CD8-positive, alpha-beta T cell (primary cell): ENCODE measurements at regions of chr4 and their contacts with region 1.

Region 1: GRCh38 chr4:88591787-88592599 is at the start of gene HERC3:
- DNase-seq: peak; percentile 75 to 94 (median 88)
- ATAC-seq: peak; percentile 84
- H3K4me3 ChIP-seq: peak within 1 kb of the TSS; percentile 89 to 96
- H3K4me3 Mint-ChIP-seq: peak within 1 kb of the TSS; percentile 99
- H3K27ac ChIP-seq: peak within 1 kb of the TSS; percentile 82 to 85
- H3K27ac Mint-ChIP-seq: peak within 1 kb of the TSS; percentile 97
- H3K4me1 ChIP-seq: peaks cover 22% of the 10 kb centered on the region
- H3K4me1 Mint-ChIP-seq: peaks cover 43% of the 10 kb centered on the region
- H3K27me3 ChIP-seq: no peaks in the 10 kb centered on the region
- H3K27me3 Mint-ChIP-seq: no peaks in the 10 kb centered on the region
- CTCF ChIP-seq: no peak
- total RNA-seq, gene HERC3: 50.4 to 62.4 TPM

Region 2: GRCh38 chr4:86934771-86935565 is 1657.0 kb before region 1 on chr4 and contains the start of gene AFF1:
- CTCF ChIA-PET with region 1: no interaction called
- POLR2A ChIA-PET with region 1: no interaction called
- intact Hi-C with region 1: loop called (anchors 10 kb)
- DNase-seq: peak; percentile 74 to 97 (median 85)
- ATAC-seq: peak; percentile 71
- H3K4me3 ChIP-seq: peak within 1 kb of the TSS; percentile 76 to 87
- H3K4me3 Mint-ChIP-seq: peak within 1 kb of the TSS; percentile 88
- H3K27ac ChIP-seq: peak within 1 kb of the TSS; percentile 81 to 85
- H3K27ac Mint-ChIP-seq: peak within 1 kb of the TSS; percentile 95
- H3K4me1 ChIP-seq: peaks cover 42% of the 10 kb centered on the region
- H3K4me1 Mint-ChIP-seq: peaks cover 50% of the 10 kb centered on the region
- H3K27me3 ChIP-seq: no peaks in the 10 kb centered on the region
- H3K27me3 Mint-ChIP-seq: no peaks in the 10 kb centered on the region
- CTCF ChIP-seq: peak; percentile 44
- total RNA-seq, gene AFF1: 32.3 to 33.8 TPM

Region 3: GRCh38 chr4:88378691-88379559 is 213.1 kb before region 1 on chr4 and contains the start of gene HERC6:
- CTCF ChIA-PET with region 1: no interaction called
- POLR2A ChIA-PET with region 1: no interaction called
- intact Hi-C with region 1: loop called in 1 of 2 experiments (anchors 5 kb)
- DNase-seq: peak; percentile 39 to 93 (median 73)
- ATAC-seq: peak; percentile 63
- H3K4me3 ChIP-seq: peak within 1 kb of the TSS; percentile 82 to 98
- H3K4me3 Mint-ChIP-seq: peak within 1 kb of the TSS; percentile 96
- H3K27ac ChIP-seq: peak within 1 kb of the TSS; percentile 88 to 91
- H3K27ac Mint-ChIP-seq: peak within 1 kb of the TSS; percentile 95
- H3K4me1 ChIP-seq: peaks cover 31% of the 10 kb centered on the region
- H3K4me1 Mint-ChIP-seq: peaks cover 43% of the 10 kb centered on the region
- H3K27me3 ChIP-seq: no peaks in the 10 kb centered on the region
- H3K27me3 Mint-ChIP-seq: no peaks in the 10 kb centered on the region
- CTCF ChIP-seq: peak; percentile 57
- total RNA-seq, gene HERC6: 8.2 TPM

Region 4: GRCh38 chr4:88523325-88524129 is 68.5 kb before region 1 on chr4 and contains the start of gene PYURF:
- CTCF ChIA-PET with region 1: interaction called, 3 read pairs
- POLR2A ChIA-PET with region 1: no interaction called
- intact Hi-C with region 1: loop called (anchors 2 to 5 kb)
- DNase-seq: peak; percentile 31 to 87 (median 75)
- ATAC-seq: peak; percentile 76
- H3K4me3 ChIP-seq: peak within 1 kb of the TSS; percentile 78 to 90
- H3K4me3 Mint-ChIP-seq: peak within 1 kb of the TSS; percentile 93
- H3K27ac ChIP-seq: peak within 1 kb of the TSS; percentile 54 to 76
- H3K27ac Mint-ChIP-seq: peak within 1 kb of the TSS; percentile 94
- H3K4me1 ChIP-seq: peaks cover 16% of the 10 kb centered on the region
- H3K4me1 Mint-ChIP-seq: peaks cover 43% of the 10 kb centered on the region
- H3K27me3 ChIP-seq: no peaks in the 10 kb centered on the region
- H3K27me3 Mint-ChIP-seq: no peaks in the 10 kb centered on the region
- CTCF ChIP-seq: no peak
- total RNA-seq, gene PYURF: 25.5 to 27.6 TPM

Region 5: DNA sequence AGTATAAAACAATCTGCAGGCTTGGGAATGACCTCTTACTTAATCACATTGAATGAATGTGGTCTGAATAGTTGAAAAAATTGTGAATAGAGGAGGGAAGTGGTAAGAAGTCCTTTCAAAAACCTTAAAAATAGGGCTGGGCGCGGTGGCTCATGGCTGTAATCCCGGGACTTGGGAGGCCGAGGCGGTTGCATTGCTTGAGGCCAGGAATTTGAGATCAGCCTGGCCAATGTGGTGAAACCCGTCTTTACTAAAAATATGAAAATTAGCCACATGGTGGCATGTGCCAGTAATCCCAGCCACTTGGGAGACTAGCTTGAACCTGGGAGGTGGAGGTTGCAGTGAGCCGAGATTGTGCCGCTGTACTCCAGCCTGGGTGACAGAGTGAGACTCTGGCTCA is 36.8 kb after region 1 on chr4:
- CTCF ChIA-PET with region 1: no interaction called
- POLR2A ChIA-PET with region 1: no interaction called
- intact Hi-C with region 1: loop called in 1 of 2 experiments (anchors 5 kb)
- DNase-seq: no peak
- ATAC-seq: no peak
- H3K4me3 ChIP-seq: no peak overlapping the region
- H3K4me3 Mint-ChIP-seq: no peak overlapping the region
- H3K27ac ChIP-seq: no peak overlapping the region
- H3K27ac Mint-ChIP-seq: no peak overlapping the region
- H3K4me1 ChIP-seq: no peaks in the 10 kb centered on the region
- H3K4me1 Mint-ChIP-seq: peaks cover 36% of the 10 kb centered on the region
- H3K27me3 ChIP-seq: no peaks in the 10 kb centered on the region
- H3K27me3 Mint-ChIP-seq: no peaks in the 10 kb centered on the region
- CTCF ChIP-seq: no peak

Region 6: DNA sequence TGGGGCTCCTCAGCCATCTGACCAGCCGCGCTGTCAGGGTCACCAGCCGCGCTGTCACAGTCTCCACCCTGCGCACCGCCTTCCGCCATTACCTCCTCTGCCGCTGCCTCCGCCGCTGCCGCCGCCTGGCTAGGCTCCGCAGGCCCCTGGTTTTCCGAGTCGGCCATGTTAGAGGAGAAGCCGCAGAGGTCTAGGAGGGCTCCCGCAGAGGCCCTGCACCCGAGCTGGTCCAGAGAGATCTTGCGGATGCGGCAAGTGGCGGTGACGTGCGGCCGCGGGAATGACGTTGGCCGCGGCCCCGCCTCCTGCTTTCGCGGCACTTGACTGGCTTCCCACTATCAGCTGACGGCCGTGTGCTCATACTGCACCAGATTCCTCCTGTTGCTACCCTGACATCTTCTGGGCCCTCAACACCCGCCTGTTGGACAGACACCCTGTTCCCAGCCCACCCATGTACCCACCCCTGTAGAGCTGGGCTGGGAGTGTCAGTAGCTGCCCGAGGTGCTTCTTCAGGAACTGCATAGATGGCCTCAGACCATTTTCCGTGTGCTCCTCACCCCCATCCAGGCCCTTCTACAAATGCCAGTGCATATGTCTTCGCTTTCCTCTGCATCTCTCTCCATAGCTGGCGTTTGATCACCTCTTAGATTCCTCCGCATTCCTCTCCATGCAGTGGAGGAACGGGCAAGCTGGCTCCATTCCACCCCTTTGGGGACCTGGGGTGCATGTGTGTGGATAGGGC is 105.8 kb after region 1 on chr4 and contains the start of gene NAP1L5:
- CTCF ChIA-PET with region 1: no interaction called
- POLR2A ChIA-PET with region 1: interaction called, 3 read pairs
- intact Hi-C with region 1: loop called in 1 of 2 experiments (anchors 2 kb)
- DNase-seq: peak; percentile 34 to 92 (median 74)
- ATAC-seq: peak; percentile 89
- H3K4me3 ChIP-seq: peak within 1 kb of the TSS; percentile 64 to 77
- H3K4me3 Mint-ChIP-seq: peak within 1 kb of the TSS; percentile 89
- H3K27ac ChIP-seq: peak within 1 kb of the TSS; percentile 73 to 79
- H3K27ac Mint-ChIP-seq: peak within 1 kb of the TSS; percentile 90
- H3K4me1 ChIP-seq: peaks cover 4% of the 10 kb centered on the region
- H3K4me1 Mint-ChIP-seq: peaks cover 18% of the 10 kb centered on the region
- H3K27me3 ChIP-seq: no peaks in the 10 kb centered on the region
- H3K27me3 Mint-ChIP-seq: no peaks in the 10 kb centered on the region
- CTCF ChIP-seq: no peak
- total RNA-seq, gene NAP1L5: 15.5 to 16.3 TPM

Region 7: GRCh38 chr4:89110986-89111832 is 519.2 kb after region 1 on chr4 and contains the start of gene TIGD2:
- CTCF ChIA-PET with region 1: no interaction called
- POLR2A ChIA-PET with region 1: no interaction called
- intact Hi-C with region 1: loop called (anchors 2 kb)
- DNase-seq: peak; percentile 78 to 96 (median 88)
- ATAC-seq: peak; percentile 94
- H3K4me3 ChIP-seq: peak within 1 kb of the TSS; percentile 75 to 80
- H3K4me3 Mint-ChIP-seq: peak within 1 kb of the TSS; percentile 89
- H3K27ac ChIP-seq: peak within 1 kb of the TSS; percentile 63 to 66
- H3K27ac Mint-ChIP-seq: peak within 1 kb of the TSS; percentile 79
- H3K4me1 ChIP-seq: peaks cover 16% of the 10 kb centered on the region
- H3K4me1 Mint-ChIP-seq: peaks cover 24% of the 10 kb centered on the region
- H3K27me3 ChIP-seq: no peaks in the 10 kb centered on the region
- H3K27me3 Mint-ChIP-seq: no peaks in the 10 kb centered on the region
- CTCF ChIP-seq: peak; percentile 68
- total RNA-seq, gene TIGD2: 2.4 to 2.9 TPM